Activated CD8-positive, alpha-beta T cell treated with anti-CD3 and anti-CD28 coated beads, Interleukin-2, amount 10 ng/mL, durations not matched to agents 7 days and 5 days (primary cell): ENCODE measurements at regions of chrX and their contacts with region 1.

Region 1: DNA sequence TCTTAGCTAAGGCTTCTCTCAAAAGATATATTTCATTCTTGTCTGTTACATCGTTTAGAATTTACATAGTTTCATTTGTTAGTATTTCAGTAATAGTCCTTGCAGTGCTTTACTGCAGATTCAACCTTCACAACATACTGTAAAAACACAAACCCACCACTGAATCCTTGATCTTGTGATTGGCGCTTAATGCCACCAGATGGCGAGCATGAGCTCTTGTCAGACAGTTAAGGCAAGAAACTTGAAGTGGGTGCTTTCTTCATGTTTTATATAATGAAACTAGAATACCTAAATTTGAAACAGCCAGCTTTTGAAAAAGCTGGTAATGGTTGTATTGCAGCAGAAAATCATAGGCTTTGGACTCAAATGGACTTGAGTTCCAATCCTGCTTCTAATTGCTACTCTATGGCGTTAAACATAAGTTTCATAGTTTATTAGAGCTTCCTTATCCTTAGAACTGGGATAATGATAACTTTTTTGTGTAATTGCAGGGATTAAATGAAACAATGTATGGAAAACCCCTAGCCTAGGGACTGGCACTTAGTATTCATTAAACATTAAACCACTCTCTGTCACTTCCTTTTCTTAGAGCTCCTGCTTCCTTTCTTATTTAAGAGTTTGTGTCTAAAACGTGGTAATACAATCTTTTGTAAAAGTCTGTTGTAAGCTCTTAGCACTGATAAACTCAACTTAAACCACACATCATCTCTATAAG is 95.1 kb downstream of the USP9X start:
- DNase-seq: peak; percentile 61
- ATAC-seq: peak; percentile 65
- H3K4me3 Mint-ChIP-seq: peak overlapping the region; percentile 12
- H3K27ac Mint-ChIP-seq: peak overlapping the region; percentile 76
- H3K4me1 Mint-ChIP-seq: peaks cover 51% of the 10 kb centered on the region
- H3K27me3 Mint-ChIP-seq: no peaks in the 10 kb centered on the region

Region 2: DNA sequence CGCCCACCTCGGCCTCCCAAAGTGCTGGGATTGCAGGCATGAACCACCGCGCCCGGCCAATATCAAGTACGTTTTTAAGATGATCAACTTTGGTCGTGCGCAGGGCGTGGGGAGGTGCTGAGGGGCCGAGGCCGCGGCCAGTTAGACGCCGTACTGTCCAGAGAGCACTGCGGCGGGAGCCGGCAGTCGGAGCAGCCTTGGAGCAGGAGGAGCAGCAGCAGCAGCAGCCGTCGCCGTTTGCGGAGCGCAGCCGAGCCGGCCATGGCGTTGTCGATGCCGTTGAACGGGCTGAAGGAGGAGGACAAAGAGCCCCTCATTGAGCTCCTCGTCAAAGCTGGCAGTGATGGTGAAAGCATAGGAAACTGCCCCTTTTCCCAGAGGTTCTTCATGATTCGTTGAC is 103.6 kb before region 1 on chrX:
- CTCF ChIA-PET with region 1: no interaction called
- POLR2A ChIA-PET with region 1: no interaction called
- DNase-seq: no peak
- ATAC-seq: no peak
- H3K4me3 Mint-ChIP-seq: no peak overlapping the region
- H3K27ac Mint-ChIP-seq: no peak overlapping the region
- H3K4me1 Mint-ChIP-seq: no peaks in the 10 kb centered on the region
- H3K27me3 Mint-ChIP-seq: no peaks in the 10 kb centered on the region

Region 3: GRCh38 chrX:41167888-41168287 is 12.5 kb before region 1 on chrX:
- CTCF ChIA-PET with region 1: interaction called, 20 read pairs
- POLR2A ChIA-PET with region 1: no interaction called
- DNase-seq: no peak
- ATAC-seq: no peak
- H3K4me3 Mint-ChIP-seq: no peak overlapping the region
- H3K27ac Mint-ChIP-seq: no peak overlapping the region
- H3K4me1 Mint-ChIP-seq: no peaks in the 10 kb centered on the region
- H3K27me3 Mint-ChIP-seq: no peaks in the 10 kb centered on the region

Region 4: DNA sequence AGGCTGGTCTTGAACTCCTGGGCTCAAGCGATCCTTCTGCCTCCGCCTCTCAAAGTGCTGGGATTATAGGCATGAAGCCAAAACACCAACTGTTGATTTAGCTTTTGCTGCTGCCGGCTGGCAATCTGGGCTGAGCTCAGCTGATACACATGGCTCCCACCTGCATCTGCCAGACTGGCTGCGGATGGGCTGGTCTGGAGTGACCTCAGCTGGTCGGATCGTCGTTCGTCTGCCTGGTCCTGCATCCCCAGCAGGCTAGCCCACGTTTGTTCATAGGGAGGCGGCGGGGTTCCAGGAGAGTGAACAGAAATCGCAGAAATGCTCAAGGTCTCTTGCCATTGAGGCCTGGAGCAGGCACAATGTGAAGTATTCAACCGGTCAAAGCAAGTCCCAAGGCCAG is 79.2 kb after region 1 on chrX:
- CTCF ChIA-PET with region 1: interaction called, 27 read pairs
- POLR2A ChIA-PET with region 1: no interaction called
- DNase-seq: no peak
- ATAC-seq: no peak
- H3K4me3 Mint-ChIP-seq: no peak overlapping the region
- H3K27ac Mint-ChIP-seq: no peak overlapping the region
- H3K4me1 Mint-ChIP-seq: peaks cover 5% of the 10 kb centered on the region
- H3K27me3 Mint-ChIP-seq: no peaks in the 10 kb centered on the region

Region 5: GRCh38 chrX:41350976-41351569 is 170.7 kb after region 1 on chrX:
- CTCF ChIA-PET with region 1: no interaction called
- POLR2A ChIA-PET with region 1: no interaction called
- DNase-seq: no peak
- ATAC-seq: peak; percentile 6
- H3K4me3 Mint-ChIP-seq: no peak overlapping the region
- H3K27ac Mint-ChIP-seq: no peak overlapping the region
- H3K4me1 Mint-ChIP-seq: peaks cover 30% of the 10 kb centered on the region
- H3K27me3 Mint-ChIP-seq: no peaks in the 10 kb centered on the region